Activated naive CD4-positive, alpha-beta T cell treated with anti-CD3 and anti-CD28 coated beads for 36 hours (primary cell): ENCODE measurements at regions of chr7 and their contacts with region 1.

Region 1: DNA sequence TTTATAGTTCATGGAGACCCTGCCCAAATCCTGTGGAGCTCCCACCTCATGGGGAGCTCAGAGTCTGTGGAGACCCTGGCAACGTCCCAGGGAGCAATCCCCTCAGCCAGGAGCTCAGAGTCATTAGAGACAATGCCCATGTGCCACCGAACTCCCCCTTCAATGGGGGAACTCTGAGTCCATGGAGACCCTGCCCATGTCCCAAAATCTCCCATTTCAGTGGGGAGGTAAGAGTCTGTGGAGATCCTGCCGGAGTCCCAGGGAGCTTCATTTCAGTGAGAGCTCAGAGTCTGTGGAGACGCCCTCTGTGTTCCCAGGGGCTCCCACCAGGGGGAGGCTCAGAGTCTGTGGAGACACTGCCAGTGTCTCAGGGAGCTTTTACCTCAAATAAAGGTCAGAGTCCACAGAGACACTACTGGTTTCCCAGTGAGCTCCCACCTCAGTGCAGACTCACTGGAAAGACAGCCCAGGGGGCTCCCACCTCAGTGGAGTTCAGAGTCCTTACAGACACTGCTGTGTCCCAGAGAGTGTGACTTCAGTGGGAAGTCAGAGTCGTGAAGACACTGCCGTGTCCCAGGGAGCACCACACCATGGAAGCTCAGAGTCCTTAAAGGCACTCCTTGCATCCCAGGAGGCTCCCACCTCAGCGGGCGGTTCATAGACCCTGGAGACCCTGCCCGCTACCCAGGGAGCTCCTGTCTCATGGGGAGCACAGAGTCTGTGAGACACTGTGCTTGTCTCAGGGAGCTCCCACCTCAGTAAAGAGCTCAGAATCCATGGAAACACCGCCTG is 5.0 kb downstream of the MYO1G start:
- DNase-seq: peak; percentile 69
- H3K4me3 Mint-ChIP-seq: no peak overlapping the region
- H3K27ac Mint-ChIP-seq: peak overlapping the region; percentile 83
- H3K4me1 Mint-ChIP-seq: peaks cover 36% of the 10 kb centered on the region
- H3K27me3 Mint-ChIP-seq: no peaks in the 10 kb centered on the region

Region 2: GRCh38 chr7:44894888-44895580 is 78.8 kb before region 1 on chr7:
- CTCF ChIA-PET with region 1: no interaction called
- intact Hi-C with region 1: no loop called
- DNase-seq: no peak
- H3K4me3 Mint-ChIP-seq: no peak overlapping the region
- H3K27ac Mint-ChIP-seq: no peak overlapping the region
- H3K4me1 Mint-ChIP-seq: peaks cover 29% of the 10 kb centered on the region
- H3K27me3 Mint-ChIP-seq: no peaks in the 10 kb centered on the region

Region 3: DNA sequence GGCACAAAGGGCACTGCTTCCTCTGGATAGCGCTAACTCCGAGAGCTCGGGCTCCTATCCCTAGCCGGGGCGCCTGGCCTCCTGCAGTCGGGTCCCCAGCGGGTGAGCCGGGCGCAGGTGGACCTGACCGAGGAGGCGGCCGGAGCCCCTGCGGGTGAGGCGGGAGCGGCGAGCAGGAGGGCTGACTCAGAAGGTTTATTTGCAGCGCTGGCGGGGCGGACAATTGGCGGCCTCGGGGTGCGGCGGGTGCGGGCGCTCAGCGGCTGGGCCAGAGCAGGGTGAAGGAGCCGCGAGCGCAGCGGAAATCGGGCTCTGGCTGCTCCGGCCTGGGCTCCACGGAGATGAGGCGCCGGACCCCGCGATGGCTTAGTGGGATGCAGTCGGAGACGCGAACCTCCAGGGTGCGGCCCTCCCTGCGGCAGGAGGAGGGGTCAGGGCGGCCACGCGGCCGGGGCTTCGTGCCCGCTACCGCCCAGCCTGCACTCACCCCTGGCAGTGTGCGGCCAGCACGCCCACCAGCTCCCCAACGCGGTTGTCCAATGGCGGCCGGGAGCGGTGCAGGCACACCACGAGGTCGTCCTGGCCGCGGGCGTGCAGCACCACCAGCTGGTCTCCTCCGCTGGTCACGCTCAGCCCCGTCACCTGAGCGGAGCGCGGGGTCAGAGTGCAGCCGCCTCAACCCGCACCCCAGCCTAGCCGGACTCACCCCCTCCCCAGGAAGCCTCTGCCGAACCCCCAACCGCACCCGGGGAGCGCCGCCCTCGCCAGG is 11.1 kb before region 1 on chr7:
- CTCF ChIA-PET with region 1: interaction called, 17 read pairs
- intact Hi-C with region 1: no loop called
- DNase-seq: no peak
- H3K4me3 Mint-ChIP-seq: no peak overlapping the region
- H3K27ac Mint-ChIP-seq: no peak overlapping the region
- H3K4me1 Mint-ChIP-seq: peaks cover 20% of the 10 kb centered on the region
- H3K27me3 Mint-ChIP-seq: no peaks in the 10 kb centered on the region

Region 4: DNA sequence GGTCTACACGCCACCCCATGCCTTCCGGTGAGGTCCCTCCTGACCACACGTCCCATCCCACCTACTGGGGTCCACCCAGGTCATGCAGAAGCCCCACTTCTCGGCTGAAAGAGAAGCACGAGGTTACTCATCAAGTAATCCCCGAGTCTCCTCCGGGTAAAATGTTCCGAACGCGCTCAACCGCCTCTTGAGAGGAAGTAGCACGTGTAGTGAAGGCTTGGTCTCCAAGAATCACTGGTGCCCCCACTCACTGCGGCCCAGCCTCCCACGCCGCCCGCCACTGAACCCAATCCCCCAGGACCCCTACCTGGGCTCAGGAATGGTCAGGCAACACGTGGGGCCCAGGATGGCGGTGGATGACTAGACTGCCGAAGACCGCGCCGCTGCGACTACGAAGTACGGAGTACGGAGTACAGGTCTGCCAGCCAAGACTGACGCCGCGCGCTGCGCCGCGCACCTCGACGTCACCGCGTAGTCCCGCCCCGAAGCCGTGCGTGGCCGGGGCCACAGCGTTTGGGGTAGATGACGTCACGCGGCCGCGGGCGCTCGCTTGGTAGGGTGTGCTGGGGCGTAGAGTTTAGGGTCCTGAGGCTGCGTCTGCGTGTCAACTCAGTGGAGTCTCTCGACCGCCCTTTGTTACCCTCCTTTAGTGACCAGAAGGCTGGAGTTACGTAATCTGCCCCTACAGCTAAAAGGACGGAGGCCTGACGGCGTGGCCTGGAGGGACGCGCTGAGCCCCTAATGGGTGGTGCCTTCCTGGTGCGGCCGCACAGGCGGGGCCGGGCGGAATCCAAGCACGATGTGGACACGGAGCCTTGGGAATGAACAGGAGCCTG is 12.6 kb after region 1 on chr7:
- CTCF ChIA-PET with region 1: interaction called, 17 read pairs
- intact Hi-C with region 1: loop called (anchors 1 kb)
- DNase-seq: peak; percentile 96
- H3K4me3 Mint-ChIP-seq: peak overlapping the region; percentile 99
- H3K27ac Mint-ChIP-seq: peak overlapping the region; percentile 99
- H3K4me1 Mint-ChIP-seq: peaks cover 43% of the 10 kb centered on the region
- H3K27me3 Mint-ChIP-seq: no peaks in the 10 kb centered on the region

Region 5: DNA sequence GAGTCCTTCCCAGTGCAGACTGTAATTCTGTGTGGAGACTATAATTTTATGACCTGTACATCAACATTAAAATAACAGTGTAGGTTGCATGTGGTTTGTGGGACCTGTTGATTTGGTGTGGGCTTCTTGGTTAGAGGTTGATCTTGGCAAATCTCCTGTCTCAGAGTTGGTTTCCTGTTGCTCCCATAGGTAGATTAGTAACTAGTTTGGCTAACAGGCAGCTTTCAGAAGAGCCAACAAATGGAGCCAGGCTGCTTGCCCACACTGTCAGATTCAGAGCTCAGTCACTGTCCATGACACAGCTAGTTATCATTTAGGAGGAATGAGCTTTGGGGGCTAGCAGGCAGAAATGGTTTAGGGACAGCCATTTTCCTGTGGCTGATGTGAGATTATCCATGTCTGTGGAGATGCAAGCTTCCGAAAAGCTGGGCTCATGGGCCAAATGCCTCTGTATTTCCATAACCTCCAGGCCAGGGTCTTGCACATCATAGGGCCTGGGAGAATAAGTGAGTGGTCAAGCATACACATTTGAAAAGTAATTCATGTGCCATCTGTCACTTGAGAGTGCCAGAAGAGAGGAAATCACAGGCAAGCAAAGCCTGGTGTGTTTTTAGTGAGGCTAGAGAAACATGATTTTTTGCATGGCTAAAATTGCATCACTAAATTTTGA is 59.6 kb after region 1 on chr7:
- CTCF ChIA-PET with region 1: interaction called, 11 read pairs
- intact Hi-C with region 1: loop called (anchors 1 kb)
- DNase-seq: no peak
- H3K4me3 Mint-ChIP-seq: no peak overlapping the region
- H3K27ac Mint-ChIP-seq: peak overlapping the region; percentile 84
- H3K4me1 Mint-ChIP-seq: peaks cover 79% of the 10 kb centered on the region
- H3K27me3 Mint-ChIP-seq: no peaks in the 10 kb centered on the region